HEK293 (cell line): ENCODE measurements at regions of chr9 and their contacts with region 1.

Region 1: DNA sequence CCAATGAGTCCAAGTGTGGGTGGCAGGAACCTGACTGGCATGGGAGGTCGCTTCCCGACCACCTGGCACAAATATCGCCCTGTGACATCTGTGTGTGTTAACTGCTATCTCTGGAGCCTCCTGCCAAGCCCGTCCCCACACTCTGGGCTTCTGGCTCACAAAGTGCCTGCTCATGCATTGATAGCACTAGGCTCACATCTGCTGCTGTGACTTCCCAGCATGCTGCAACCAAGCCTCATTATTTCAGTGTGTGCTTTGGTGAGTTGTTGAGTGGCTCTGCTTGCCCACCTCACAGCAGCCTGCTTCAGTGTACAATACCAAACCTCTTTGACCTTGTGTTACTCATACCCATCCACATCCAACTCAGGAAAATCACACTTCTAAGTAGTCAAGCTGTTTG is 139.8 kb downstream of the APBA1 start:
- H3K4me3 ChIP-seq: no peak overlapping the region
- H3K27ac ChIP-seq: no peak overlapping the region
- H3K4me1 ChIP-seq: no peaks in the 10 kb centered on the region
- CTCF ChIP-seq: no peak

Region 2: GRCh38 chr9:69485470-69485869 is 46.9 kb before region 1 on chr9:
- CTCF ChIA-PET with region 1: no interaction called
- POLR2A ChIA-PET with region 1: no interaction called
- H3K4me3 ChIP-seq: no peak overlapping the region
- H3K27ac ChIP-seq: no peak overlapping the region
- H3K4me1 ChIP-seq: no peaks in the 10 kb centered on the region
- CTCF ChIP-seq: no peak

Region 3: GRCh38 chr9:69549310-69550202 is 17.2 kb after region 1 on chr9:
- CTCF ChIA-PET with region 1: interaction called, 10 read pairs
- POLR2A ChIA-PET with region 1: no interaction called
- H3K4me3 ChIP-seq: no peak overlapping the region
- H3K27ac ChIP-seq: no peak overlapping the region
- H3K4me1 ChIP-seq: no peaks in the 10 kb centered on the region
- CTCF ChIP-seq: 0 out of 2 replicates have a peak, but pooled peaks have one; percentile 36